Dorsolateral prefrontal cortex (tissue), 120 donors: ENCODE measurements at regions of chr2 and their contacts with region 1.

Region 1: GRCh38 chr2:24123195-24123921 is at the starts of genes FAM228B and PFN4:
- DNase-seq: peak; percentile 69 to 93 (median 86)
- H3K4me3 ChIP-seq: peak within 1 kb of the TSS; percentile 53 to 89 (median 77)
- H3K27ac ChIP-seq: peak within 1 kb of the TSS; percentile 80 to 98 (median 94)
- H3K27me3 ChIP-seq: no peaks in the 10 kb centered on the region
- CTCF ChIP-seq: peak in 27 of 56 donors; percentile 3 to 46 (median 21)
- total RNA-seq, gene FAM228B: 55.2 to 109 (median 79.9) TPM
- total RNA-seq, gene PFN4: 0.43 to 2.6 (median 0.97) TPM in 60 of 120 experiments, not detected in the others

Region 2: GRCh38 chr2:24084386-24085361 is 38.7 kb before region 1 on chr2 and contains the start of gene TP53I3:
- intact Hi-C with region 1: loop called (anchors 2 to 5 kb)
- DNase-seq: peak; percentile 59 to 89 (median 77)
- H3K4me3 ChIP-seq: peak within 1 kb of the TSS; percentile 39 to 81 (median 68)
- H3K27ac ChIP-seq: peak within 1 kb of the TSS in 57 of 59 donors; percentile 30 to 90 (median 80)
- H3K27me3 ChIP-seq: no peaks in the 10 kb centered on the region
- CTCF ChIP-seq: peak; percentile 68 to 99 (median 92)
- total RNA-seq, gene TP53I3: 0.39 to 11.1 (median 4.0) TPM

Region 3: DNA sequence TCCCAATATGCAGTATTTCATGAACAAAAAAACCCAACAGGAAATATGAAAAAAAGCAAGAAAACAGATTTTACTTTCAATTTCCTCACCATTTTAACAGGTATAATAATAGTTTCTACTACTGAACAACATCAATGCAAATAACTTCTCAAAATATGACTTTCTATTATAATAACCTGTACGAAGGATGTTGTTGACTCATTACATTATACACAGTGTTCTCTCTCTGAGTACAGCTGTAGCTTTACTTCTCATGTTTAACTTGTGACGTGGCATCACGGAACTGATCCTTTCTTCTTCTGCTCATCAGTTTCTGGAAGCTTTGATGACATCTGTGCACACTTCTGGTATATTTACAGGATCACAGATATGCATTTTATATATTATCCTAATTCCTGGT is 91.5 kb after region 1 on chr2:
- intact Hi-C with region 1: loop called in 1 of 2 experiments (anchors 10 kb)
- DNase-seq: no peak
- H3K4me3 ChIP-seq: no peak overlapping the region
- H3K27ac ChIP-seq: no peak overlapping the region
- H3K27me3 ChIP-seq: no peaks in the 10 kb centered on the region
- CTCF ChIP-seq: no peak